Activated CD4-positive, alpha-beta T cell treated with anti-CD3 and anti-CD28 coated beads, Interleukin-2, amount 10 ng/mL, durations not matched to agents 24 days and 14 days (primary cell): ENCODE measurements at regions of chr3 and their contacts with region 1.

Region 1: DNA sequence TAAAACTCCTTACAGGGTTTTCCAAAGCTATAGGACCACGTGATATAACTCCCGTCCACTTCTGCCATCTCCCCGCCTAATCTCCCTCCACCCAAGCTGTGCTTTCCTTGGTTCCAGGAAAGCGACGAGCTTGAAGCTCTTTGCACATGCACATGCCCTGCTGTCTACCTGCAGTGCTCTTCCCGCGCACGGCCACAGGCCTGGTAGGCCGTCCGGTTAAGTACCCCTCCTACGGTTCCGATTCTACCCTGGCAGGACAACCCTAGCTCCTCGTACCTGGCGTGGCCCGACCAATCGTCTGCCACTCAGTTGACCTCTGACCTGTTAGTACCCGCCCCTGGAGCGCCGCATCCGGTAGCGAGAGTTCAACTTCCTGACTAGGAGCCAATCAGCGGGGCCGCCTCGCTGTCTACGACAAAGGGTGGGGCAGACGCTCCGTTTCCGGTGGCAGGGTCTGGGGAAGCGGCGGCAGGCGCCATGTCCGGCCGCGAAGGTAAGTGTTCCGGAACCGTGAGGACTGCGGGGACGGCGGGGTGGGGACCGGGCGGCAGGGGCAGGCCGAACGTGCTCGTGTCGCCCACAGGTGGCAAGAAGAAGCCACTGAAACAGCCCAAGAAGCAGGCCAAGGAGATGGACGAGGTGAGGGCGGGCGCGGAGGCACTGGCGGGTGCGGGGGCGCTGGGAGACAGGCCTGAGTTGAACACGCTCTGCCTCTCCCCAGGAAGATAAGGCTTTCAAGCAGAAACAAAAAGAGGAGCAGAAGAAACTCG is at the starts of genes CCDC51 and TMA7:
- DNase-seq: peak; percentile 100
- H3K4me3 Mint-ChIP-seq: peak within 1 kb of the TSS; percentile 96
- H3K27ac Mint-ChIP-seq: peak within 1 kb of the TSS; percentile 92
- H3K4me1 Mint-ChIP-seq: peaks cover 20% of the 10 kb centered on the region
- H3K27me3 Mint-ChIP-seq: no peaks in the 10 kb centered on the region
- total RNA-seq, gene CCDC51: 24.4 and 25.9 TPM in 2 replicates
- total RNA-seq, gene TMA7: 272 and 275 TPM in 2 replicates

Region 2: DNA sequence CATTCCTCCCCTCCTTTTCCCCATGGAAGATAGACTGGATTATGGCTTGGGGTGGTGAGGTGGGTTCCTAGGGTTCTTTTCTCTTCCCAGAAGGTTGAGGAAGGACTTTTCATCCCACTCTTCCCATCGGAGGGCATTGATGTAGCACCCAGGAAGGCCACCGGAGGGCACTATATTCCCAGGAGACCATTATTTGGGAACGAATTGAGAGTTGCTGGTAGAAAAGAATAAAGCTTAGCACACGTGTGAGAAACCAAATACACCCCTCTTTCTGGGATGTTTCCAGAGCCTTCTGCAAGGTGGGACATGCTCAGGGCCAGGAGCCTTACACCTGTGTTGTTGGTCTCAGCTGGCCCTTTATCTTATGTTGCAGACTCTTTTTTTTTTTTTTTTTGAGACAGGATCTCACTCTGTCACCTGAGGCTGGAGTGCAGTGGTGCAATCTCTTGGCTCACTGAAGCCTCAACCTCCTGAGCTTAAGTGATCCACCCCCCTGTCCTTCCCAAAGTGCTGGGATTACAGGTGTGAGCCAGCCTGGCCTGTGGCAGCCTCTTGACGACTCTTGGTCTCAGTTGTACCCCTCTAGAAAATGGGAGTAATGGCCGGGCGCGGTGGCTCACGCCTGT is 245.4 kb before region 1 on chr3:
- intact Hi-C with region 1: loop called (anchors 2 kb)
- DNase-seq: peak; percentile 77
- H3K4me3 Mint-ChIP-seq: no peak overlapping the region
- H3K27ac Mint-ChIP-seq: no peak overlapping the region
- H3K4me1 Mint-ChIP-seq: no peaks in the 10 kb centered on the region
- H3K27me3 Mint-ChIP-seq: peaks cover 10% of the 10 kb centered on the region

Region 3: GRCh38 chr3:48232734-48233133 is 207.3 kb before region 1 on chr3:
- intact Hi-C with region 1: loop called (anchors 1 kb)
- DNase-seq: peak; percentile 85
- H3K4me3 Mint-ChIP-seq: no peak overlapping the region
- H3K27ac Mint-ChIP-seq: no peak overlapping the region
- H3K4me1 Mint-ChIP-seq: peaks cover 6% of the 10 kb centered on the region
- H3K27me3 Mint-ChIP-seq: peaks cover 2% of the 10 kb centered on the region

Region 4: DNA sequence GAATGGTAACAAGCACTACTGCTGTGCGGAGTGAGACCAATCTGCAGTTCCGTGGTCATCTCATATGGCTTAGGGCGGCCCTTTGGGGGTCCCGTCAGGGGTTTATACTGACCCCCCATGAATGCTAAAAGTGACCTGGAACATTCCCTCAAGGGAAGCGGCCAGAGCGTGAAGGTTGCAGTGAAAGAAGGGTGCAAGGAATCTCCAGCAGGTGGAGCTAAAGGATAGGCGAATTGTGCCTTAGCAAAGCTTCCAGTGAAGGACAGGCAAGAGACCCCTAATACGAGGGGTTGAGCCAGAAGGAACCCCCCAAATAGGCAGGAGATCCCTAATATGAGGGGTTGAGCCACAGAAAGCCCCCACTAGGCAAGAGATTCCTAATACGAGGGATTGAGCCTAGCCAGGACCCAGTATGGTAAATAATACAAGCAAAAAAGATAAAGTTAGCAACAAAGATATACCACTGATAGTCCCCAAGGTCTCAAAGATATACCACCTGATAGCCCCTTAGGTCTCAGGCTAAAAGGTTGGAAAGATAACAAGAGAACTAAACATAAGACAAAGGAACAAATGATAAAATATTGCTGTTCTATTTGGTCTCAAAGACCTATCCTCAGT is 166.3 kb before region 1 on chr3:
- intact Hi-C with region 1: loop called (anchors 1 kb)
- DNase-seq: peak; percentile 88
- H3K4me3 Mint-ChIP-seq: no peak overlapping the region
- H3K27ac Mint-ChIP-seq: no peak overlapping the region
- H3K4me1 Mint-ChIP-seq: peaks cover 22% of the 10 kb centered on the region
- H3K27me3 Mint-ChIP-seq: no peaks in the 10 kb centered on the region

Region 5: GRCh38 chr3:48400824-48401433 is 39.1 kb before region 1 on chr3:
- intact Hi-C with region 1: loop called (anchors 1 kb)
- DNase-seq: peak; percentile 89
- H3K4me3 Mint-ChIP-seq: no peak overlapping the region
- H3K27ac Mint-ChIP-seq: peak overlapping the region; percentile 51
- H3K4me1 Mint-ChIP-seq: peaks cover 2% of the 10 kb centered on the region
- H3K27me3 Mint-ChIP-seq: peaks cover 4% of the 10 kb centered on the region

Region 6: DNA sequence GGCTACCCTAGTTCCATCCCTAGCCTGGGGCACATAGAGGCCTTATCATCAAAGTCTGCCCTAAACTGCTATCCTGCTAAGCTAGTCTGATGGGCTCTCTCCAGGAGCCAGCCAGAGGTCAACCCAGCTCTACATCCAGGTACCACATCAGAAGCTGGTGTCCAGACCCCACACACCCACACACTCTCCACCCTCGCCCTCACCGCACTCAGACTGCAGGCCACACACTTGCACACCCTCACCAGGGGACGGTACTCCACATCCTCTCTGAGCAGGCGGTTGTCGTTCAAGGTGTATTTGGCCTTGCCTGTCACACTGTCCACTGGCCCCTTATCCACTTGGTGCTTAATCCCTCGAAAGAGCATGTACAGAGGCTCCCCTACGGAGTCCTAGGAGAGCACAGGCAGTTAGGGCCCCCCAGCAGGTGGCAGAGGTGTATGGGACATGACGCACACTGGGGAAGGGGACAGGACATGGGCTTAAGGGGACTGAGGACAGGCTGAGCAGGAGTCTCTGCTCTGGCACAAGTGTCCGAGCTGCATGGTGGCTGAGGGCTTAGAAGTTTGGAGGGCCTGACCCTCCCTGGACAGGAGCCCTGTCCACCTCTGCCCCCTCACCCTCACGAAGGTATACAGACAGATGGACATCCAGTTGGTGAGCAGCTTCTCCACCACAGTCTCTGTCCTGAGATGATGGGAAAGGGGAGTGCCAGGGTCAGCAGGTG is 28.2 kb before region 1 on chr3:
- intact Hi-C with region 1: no loop called
- DNase-seq: no peak
- H3K4me3 Mint-ChIP-seq: no peak overlapping the region
- H3K27ac Mint-ChIP-seq: no peak overlapping the region
- H3K4me1 Mint-ChIP-seq: no peaks in the 10 kb centered on the region
- H3K27me3 Mint-ChIP-seq: no peaks in the 10 kb centered on the region

Region 7: DNA sequence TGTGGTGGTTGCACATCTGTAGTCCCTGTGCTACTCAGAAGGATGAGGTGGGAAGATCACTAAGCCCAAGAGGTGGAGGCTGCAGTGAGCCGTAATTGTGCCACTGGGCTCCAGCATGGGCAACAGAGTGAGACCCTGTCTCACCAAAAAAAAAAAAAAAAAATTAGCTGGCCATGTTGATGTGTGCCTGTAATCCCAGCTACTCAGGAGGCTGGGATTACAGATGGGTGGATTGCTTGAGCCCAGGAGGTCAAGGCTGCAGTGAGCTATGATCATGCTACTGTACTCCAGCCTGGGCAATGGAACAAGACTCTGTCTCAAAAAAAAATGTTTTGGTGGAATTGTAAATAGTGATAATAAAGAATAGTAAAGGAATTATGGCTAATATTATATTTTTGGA is 16.5 kb after region 1 on chr3:
- intact Hi-C with region 1: no loop called
- DNase-seq: no peak
- H3K4me3 Mint-ChIP-seq: no peak overlapping the region
- H3K27ac Mint-ChIP-seq: no peak overlapping the region
- H3K4me1 Mint-ChIP-seq: peaks cover 8% of the 10 kb centered on the region
- H3K27me3 Mint-ChIP-seq: no peaks in the 10 kb centered on the region

Region 8: DNA sequence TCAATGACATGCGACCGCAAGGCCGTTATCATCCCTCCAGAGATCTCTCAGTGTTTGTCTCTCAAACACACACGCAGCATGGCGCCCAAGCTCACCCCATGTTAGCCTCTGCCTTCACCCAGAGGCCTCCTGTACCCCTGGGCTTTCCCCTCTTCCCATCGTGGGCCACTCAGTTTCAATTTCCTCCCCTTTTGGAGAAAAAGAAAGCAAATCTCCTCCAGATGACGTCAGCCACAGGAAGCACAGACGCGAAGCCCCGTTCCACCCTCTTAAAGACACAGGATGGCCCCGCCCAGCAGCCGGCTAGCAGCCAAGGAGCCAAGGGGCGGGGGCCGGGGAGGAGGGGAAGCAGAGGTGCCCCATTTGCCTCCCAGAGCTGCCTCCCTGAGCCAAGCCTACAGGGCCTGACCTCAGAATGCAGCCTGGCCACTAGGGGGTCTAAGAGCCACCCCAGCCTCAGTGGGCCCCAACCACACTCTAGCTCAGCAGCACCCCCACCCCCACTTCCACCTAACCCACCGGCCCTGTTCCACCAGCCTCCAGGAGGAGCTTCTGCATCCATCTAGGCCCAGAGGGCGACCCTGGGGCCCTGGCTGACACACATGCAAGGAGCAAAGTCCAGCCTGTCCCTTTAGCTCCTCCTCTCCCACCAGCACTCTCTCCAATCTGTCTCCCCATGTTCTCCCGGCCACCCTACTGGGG is 33.1 kb after region 1 on chr3:
- intact Hi-C with region 1: loop called (anchors 1 kb)
- DNase-seq: peak; percentile 98
- H3K4me3 Mint-ChIP-seq: peak overlapping the region; percentile 85
- H3K27ac Mint-ChIP-seq: peak overlapping the region; percentile 97
- H3K4me1 Mint-ChIP-seq: peaks cover 47% of the 10 kb centered on the region
- H3K27me3 Mint-ChIP-seq: no peaks in the 10 kb centered on the region

Region 9: GRCh38 chr3:48492543-48493501 is 52.8 kb after region 1 on chr3:
- intact Hi-C with region 1: no loop called
- DNase-seq: no peak
- H3K4me3 Mint-ChIP-seq: no peak overlapping the region
- H3K27ac Mint-ChIP-seq: no peak overlapping the region
- H3K4me1 Mint-ChIP-seq: no peaks in the 10 kb centered on the region
- H3K27me3 Mint-ChIP-seq: no peaks in the 10 kb centered on the region

Region 10: GRCh38 chr3:48548729-48549705 is 109.0 kb after region 1 on chr3:
- intact Hi-C with region 1: loop called (anchors 2 kb)
- DNase-seq: peak; percentile 95
- H3K4me3 Mint-ChIP-seq: no peak overlapping the region
- H3K27ac Mint-ChIP-seq: peak overlapping the region; percentile 37
- H3K4me1 Mint-ChIP-seq: peaks cover 24% of the 10 kb centered on the region
- H3K27me3 Mint-ChIP-seq: no peaks in the 10 kb centered on the region

Region 11: GRCh38 chr3:48974076-48974864 is 534.3 kb after region 1 on chr3:
- intact Hi-C with region 1: no loop called
- DNase-seq: no peak
- H3K4me3 Mint-ChIP-seq: no peak overlapping the region
- H3K27ac Mint-ChIP-seq: no peak overlapping the region
- H3K4me1 Mint-ChIP-seq: peaks cover 5% of the 10 kb centered on the region
- H3K27me3 Mint-ChIP-seq: no peaks in the 10 kb centered on the region